Psoas muscle (tissue), 8 donors: ENCODE measurements at regions of chr1 and their contacts with region 1.

Region 1: GRCh38 chr1:40849801-40850592 is 12.2 kb downstream of the CITED4 start:
- DNase-seq: peak; percentile 58 to 79
- ATAC-seq: peak; percentile 80 to 95 (median 88)
- H3K4me3 ChIP-seq: no peak overlapping the region
- H3K27ac ChIP-seq: no peak overlapping the region
- H3K4me1 ChIP-seq: no peaks in the 10 kb centered on the region
- H3K27me3 ChIP-seq: no peaks in the 10 kb centered on the region
- CTCF ChIP-seq: peak; percentile 90

Region 2: GRCh38 chr1:40612345-40612831 is 237.6 kb before region 1 on chr1:
- intact Hi-C with region 1: loop called (anchors 1 to 5 kb)
- DNase-seq: peak in 1 of 2 donors; percentile 27
- ATAC-seq: peak; percentile 75 to 95 (median 93)
- H3K4me3 ChIP-seq: no peak overlapping the region
- H3K27ac ChIP-seq: no peak overlapping the region
- H3K4me1 ChIP-seq: no peaks in the 10 kb centered on the region
- H3K27me3 ChIP-seq: no peaks in the 10 kb centered on the region
- CTCF ChIP-seq: peak; percentile 86

Region 3: DNA sequence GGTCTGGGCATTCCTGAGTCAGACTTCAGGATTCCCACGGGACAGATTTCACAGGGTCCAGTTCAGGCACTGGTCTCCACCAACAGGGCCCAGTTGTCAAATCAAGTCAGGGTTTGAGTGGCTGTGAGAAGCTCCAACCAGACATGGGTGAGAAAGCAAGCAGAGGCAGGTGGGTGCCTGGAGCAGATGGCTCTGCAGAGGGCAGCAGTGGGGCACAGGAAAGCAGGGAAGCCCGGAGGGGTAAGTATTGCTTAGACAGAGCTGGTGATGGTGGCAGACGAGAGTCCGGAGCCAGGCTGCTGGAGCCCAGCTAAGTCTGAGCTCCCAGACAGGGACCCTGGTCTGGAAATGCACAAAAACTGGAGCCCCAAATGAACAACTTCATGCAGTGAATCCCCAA is 224.9 kb before region 1 on chr1:
- intact Hi-C with region 1: loop called (anchors 5 kb)
- DNase-seq: no peak
- ATAC-seq: peak; percentile 57 to 68 (median 64)
- H3K4me3 ChIP-seq: no peak overlapping the region
- H3K27ac ChIP-seq: no peak overlapping the region
- H3K4me1 ChIP-seq: no peaks in the 10 kb centered on the region
- H3K27me3 ChIP-seq: no peaks in the 10 kb centered on the region
- CTCF ChIP-seq: peak; percentile 30

Region 4: DNA sequence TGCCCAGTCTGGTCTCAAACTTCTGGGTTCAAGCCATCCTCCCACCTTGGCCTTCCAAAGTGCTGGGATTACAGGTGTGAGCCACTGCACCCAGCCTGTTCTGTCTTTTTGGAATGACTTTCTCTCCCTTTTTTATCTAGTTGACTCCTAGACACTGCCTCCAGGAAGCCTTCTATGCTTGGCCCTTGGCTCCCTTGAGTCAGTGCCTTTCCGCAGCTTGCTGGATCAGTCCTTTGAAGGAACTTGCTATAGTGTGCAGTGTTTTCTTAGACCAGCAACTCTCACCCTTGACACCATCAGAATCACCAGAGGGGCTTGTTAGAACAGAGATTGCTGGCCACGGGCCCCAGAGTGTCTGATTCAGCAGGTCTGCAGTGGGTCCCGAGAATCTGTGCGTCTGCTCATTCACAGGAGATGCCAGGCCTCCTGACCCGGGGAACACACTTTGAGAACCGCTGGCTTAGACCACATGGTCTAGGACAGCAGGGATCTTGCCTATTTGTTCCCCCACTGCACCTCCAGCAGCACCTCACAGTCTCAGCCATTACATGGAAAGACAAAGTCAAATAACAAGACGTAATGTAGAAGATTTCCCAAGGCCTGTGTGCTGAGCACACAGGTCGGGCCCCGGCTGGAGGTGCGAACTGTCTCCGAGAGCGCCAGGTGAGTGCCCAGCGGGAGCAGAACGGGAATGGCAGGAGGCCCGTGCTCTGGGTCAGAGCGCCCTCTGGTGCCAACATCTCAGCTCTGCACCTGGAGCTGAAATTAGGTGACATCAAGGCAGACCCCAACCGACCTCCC is 102.1 kb after region 1 on chr1:
- intact Hi-C with region 1: loop called (anchors 1 to 2 kb)
- DNase-seq: peak; percentile 59 to 79
- ATAC-seq: peak; percentile 83 to 92 (median 86)
- H3K4me3 ChIP-seq: no peak overlapping the region
- H3K27ac ChIP-seq: no peak overlapping the region
- H3K4me1 ChIP-seq: no peaks in the 10 kb centered on the region
- H3K27me3 ChIP-seq: peaks cover 0 to 16% (median 0%) of the 10 kb centered on the region in 3 donors
- CTCF ChIP-seq: peak; percentile 90